Endothelial cell of umbilical vein (primary cell): ENCODE measurements at regions of chr3 and their contacts with region 1.

Region 1: DNA sequence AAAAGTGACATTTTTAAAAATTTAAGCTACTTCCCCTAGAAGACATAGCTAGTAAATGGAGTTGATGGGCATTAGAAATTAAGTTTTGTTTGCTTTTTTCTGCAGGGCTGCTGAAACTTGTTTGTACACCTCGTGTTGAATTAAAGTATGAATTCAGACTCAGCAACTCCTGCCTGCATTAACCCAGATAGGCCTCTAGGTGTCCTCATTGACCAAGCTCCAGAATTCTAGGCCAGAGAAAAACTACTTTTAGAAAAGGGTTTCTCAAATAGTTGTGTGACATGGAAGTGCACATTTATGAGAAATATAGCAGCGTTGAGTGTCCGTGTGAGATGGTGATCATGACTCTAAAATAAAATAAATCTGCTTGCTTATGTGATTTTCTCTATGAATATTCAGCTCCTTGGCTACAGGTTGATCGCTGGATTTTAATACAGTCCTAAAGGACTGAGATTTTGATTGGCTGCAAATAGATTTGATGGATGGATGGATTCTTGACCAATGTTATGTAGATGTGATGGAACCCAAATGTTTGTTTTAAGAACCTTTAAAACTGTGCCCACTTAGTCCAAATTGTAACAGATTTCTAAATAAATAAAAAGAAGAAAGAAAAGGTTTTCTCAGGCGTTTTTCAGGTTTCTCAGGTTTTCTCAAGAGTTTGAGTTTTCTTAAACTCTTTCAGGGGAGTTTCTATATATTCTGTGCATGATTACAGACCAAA is 39.4 kb upstream of the LMOD3 start:
- DNase-seq: peak; percentile 65
- H3K4me3 ChIP-seq: no peak overlapping the region
- H3K27ac ChIP-seq: no peak overlapping the region
- H3K4me1 ChIP-seq: no peaks in the 10 kb centered on the region
- H3K27me3 ChIP-seq: peaks cover 0 to 1% of the 10 kb centered on the region in 2 experiments
- CTCF ChIP-seq: peak; percentile 75
- POLR2A ChIP-seq: no peak

Region 2: DNA sequence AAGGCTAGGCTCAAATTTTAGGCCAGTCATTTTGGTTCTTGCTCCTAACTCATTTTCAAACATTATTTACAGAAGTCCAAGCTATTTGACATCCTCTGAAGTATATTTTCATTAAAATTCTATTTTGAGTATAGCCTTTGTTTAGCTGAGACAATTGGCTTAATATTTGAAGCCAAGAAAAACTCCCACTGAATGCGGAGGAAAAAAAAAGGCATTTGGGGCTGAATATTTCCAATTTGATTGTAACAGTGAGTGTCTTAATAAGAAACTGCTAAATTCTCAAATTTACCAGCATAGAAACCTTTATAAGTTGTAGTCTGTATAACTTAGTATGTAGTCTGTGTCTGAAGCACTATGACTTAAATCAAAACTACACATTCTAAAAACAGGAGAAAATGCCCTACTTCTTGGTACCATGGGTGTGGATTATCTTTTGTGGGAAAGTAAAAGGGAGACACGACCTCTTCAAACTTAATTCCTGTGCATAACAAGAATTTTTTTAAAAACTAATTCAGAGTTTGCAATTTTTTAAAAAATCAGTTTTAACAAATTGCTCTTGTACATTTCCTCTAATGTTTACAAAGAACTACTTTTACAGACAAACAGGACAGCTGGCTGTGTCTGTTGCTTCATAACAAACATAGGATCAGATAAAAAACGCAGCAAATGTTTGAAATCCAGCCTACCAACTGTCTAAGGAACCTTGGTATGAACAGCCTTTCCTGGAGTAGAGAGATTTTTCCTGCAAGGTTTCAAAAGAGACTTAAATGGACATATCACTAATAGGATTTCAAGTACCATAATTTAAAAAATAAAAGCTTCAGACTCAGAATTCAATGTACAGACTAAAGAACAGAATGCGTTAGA is 13.4 kb after region 1 on chr3:
- CTCF ChIA-PET with region 1: interaction called, 12 read pairs
- POLR2A ChIA-PET with region 1: no interaction called
- dilution Hi-C with region 1: no loop called
- intact Hi-C with region 1: no loop called
- DNase-seq: no peak
- H3K4me3 ChIP-seq: no peak overlapping the region
- H3K27ac ChIP-seq: peak overlapping the region; percentile 77
- H3K4me1 ChIP-seq: peaks cover 39% of the 10 kb centered on the region
- H3K27me3 ChIP-seq: no peaks in the 10 kb centered on the region
- CTCF ChIP-seq: no peak
- POLR2A ChIP-seq: no peak

Region 3: GRCh38 chr3:69200384-69201068 is 38.8 kb after region 1 on chr3:
- CTCF ChIA-PET with region 1: interaction called, 17 read pairs
- POLR2A ChIA-PET with region 1: no interaction called
- dilution Hi-C with region 1: no loop called
- intact Hi-C with region 1: no loop called
- DNase-seq: peak; percentile 94
- H3K4me3 ChIP-seq: peak overlapping the region in 2 of 3 experiments; percentile 48 to 88
- H3K27ac ChIP-seq: peak overlapping the region; percentile 88
- H3K4me1 ChIP-seq: peaks cover 56% of the 10 kb centered on the region
- H3K27me3 ChIP-seq: no peaks in the 10 kb centered on the region
- CTCF ChIP-seq: no peak
- POLR2A ChIP-seq: no peak

Region 4: DNA sequence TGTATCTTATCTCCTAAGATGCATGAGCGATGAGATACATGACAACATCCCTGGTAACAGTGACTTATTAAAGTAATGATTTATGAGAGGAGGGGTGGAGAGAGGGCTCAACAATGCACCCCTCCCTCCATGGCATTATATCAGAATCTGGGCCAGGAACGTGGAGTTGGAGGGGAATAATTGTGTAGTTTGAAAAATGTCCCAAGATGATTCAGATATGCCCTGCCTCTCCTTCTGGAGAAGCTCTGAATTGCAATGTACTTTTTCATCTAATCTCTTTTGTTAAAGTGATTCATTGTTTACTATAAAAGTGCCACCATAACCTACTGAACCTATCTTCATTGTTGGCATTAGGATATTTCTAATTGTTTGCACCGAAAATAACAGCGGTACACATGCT is 137.6 kb after region 1 on chr3:
- CTCF ChIA-PET with region 1: interaction called, 230 read pairs
- POLR2A ChIA-PET with region 1: no interaction called
- dilution Hi-C with region 1: no loop called
- intact Hi-C with region 1: no loop called
- DNase-seq: peak; percentile 9
- H3K4me3 ChIP-seq: no peak overlapping the region
- H3K27ac ChIP-seq: no peak overlapping the region
- H3K4me1 ChIP-seq: peaks cover 16% of the 10 kb centered on the region
- H3K27me3 ChIP-seq: no peaks in the 10 kb centered on the region
- CTCF ChIP-seq: peak; percentile 20 to 23
- POLR2A ChIP-seq: no peak

Region 5: GRCh38 chr3:69439643-69440270 is 278.0 kb after region 1 on chr3:
- CTCF ChIA-PET with region 1: interaction called, 56 read pairs
- POLR2A ChIA-PET with region 1: no interaction called
- dilution Hi-C with region 1: no loop called
- intact Hi-C with region 1: loop called (anchors 1 kb)
- DNase-seq: peak; percentile 61
- H3K4me3 ChIP-seq: no peak overlapping the region
- H3K27ac ChIP-seq: no peak overlapping the region
- H3K4me1 ChIP-seq: no peaks in the 10 kb centered on the region
- H3K27me3 ChIP-seq: no peaks in the 10 kb centered on the region
- CTCF ChIP-seq: peak; percentile 41 to 58
- POLR2A ChIP-seq: no peak